ENCODE measurements at regions of chr1 and their contacts with region 1.

Region 1: GRCh38 chr1:235286667-235287066 is 41.3 kb downstream of the ARID4B start:
- DNase-seq: no peak
- ATAC-seq: no peak
- H3K4me3 ChIP-seq: no peak overlapping the region
- H3K4me3 Mint-ChIP-seq: peak overlapping the region; percentile 22
- H3K27ac ChIP-seq: no peak overlapping the region
- H3K27ac Mint-ChIP-seq: peak overlapping the region; percentile 4
- H3K4me1 ChIP-seq: peaks cover 45% of the 10 kb centered on the region
- H3K4me1 Mint-ChIP-seq: peaks cover 79% of the 10 kb centered on the region
- H3K27me3 ChIP-seq: no peaks in the 10 kb centered on the region
- H3K27me3 Mint-ChIP-seq: no peaks in the 10 kb centered on the region
- CTCF ChIP-seq: no peak

Region 2: GRCh38 chr1:235253219-235253962 is 33.3 kb before region 1 on chr1:
- CTCF ChIA-PET with region 1: no interaction called
- POLR2A ChIA-PET with region 1: no interaction called
- intact Hi-C with region 1: loop called in 1 of 2 experiments (anchors 5 kb)
- DNase-seq: peak; percentile 41 to 83 (median 51)
- ATAC-seq: peak; percentile 97
- H3K4me3 ChIP-seq: no peak overlapping the region
- H3K4me3 Mint-ChIP-seq: no peak overlapping the region
- H3K27ac ChIP-seq: no peak overlapping the region
- H3K27ac Mint-ChIP-seq: peak overlapping the region; percentile 38
- H3K4me1 ChIP-seq: peaks cover 4% of the 10 kb centered on the region
- H3K4me1 Mint-ChIP-seq: peaks cover 47% of the 10 kb centered on the region
- H3K27me3 ChIP-seq: no peaks in the 10 kb centered on the region
- H3K27me3 Mint-ChIP-seq: no peaks in the 10 kb centered on the region
- CTCF ChIP-seq: peak; percentile 97

Region 3: DNA sequence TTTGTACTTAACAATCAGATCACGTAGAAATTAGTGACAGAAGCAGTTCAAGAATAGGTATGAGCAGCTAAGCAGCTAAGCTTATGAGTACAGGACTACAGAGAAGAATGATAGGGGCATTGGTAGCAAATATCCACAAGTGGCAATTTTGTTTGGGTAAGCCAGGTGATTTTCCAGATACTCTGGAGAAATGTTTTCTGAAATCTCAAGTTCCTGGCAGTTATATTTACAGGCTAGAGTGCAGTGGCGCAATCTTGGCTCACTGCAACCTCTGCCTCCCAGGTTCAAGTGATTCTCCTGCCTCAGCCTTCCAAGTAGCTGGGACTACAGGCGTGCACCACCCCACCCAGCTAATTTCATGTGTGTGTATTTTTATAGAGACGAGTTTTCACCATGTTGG is 13.8 kb before region 1 on chr1:
- CTCF ChIA-PET with region 1: interaction called, 3 read pairs
- POLR2A ChIA-PET with region 1: interaction called, 3 read pairs
- intact Hi-C with region 1: loop called in 1 of 2 experiments (anchors 2 kb)
- DNase-seq: no peak
- ATAC-seq: no peak
- H3K4me3 ChIP-seq: no peak overlapping the region
- H3K4me3 Mint-ChIP-seq: no peak overlapping the region
- H3K27ac ChIP-seq: no peak overlapping the region
- H3K27ac Mint-ChIP-seq: no peak overlapping the region
- H3K4me1 ChIP-seq: peaks cover 42% of the 10 kb centered on the region
- H3K4me1 Mint-ChIP-seq: peaks cover 82% of the 10 kb centered on the region
- H3K27me3 ChIP-seq: no peaks in the 10 kb centered on the region
- H3K27me3 Mint-ChIP-seq: no peaks in the 10 kb centered on the region
- CTCF ChIP-seq: no peak

Region 4: GRCh38 chr1:235320521-235321179 is 34.0 kb after region 1 on chr1:
- CTCF ChIA-PET with region 1: no interaction called
- POLR2A ChIA-PET with region 1: no interaction called
- intact Hi-C with region 1: loop called (anchors 5 kb)
- DNase-seq: no peak
- ATAC-seq: no peak
- H3K4me3 ChIP-seq: no peak overlapping the region
- H3K4me3 Mint-ChIP-seq: peak overlapping the region; percentile 8
- H3K27ac ChIP-seq: no peak overlapping the region
- H3K27ac Mint-ChIP-seq: peak overlapping the region; percentile 2
- H3K4me1 ChIP-seq: peaks cover 60% of the 10 kb centered on the region
- H3K4me1 Mint-ChIP-seq: peaks cover 68% of the 10 kb centered on the region
- H3K27me3 ChIP-seq: no peaks in the 10 kb centered on the region
- H3K27me3 Mint-ChIP-seq: no peaks in the 10 kb centered on the region
- CTCF ChIP-seq: no peak

Measured in CD4-positive, alpha-beta T cell (primary cell).